Naive thymus-derived CD4-positive, alpha-beta T cell (primary cell): ENCODE measurements at regions of chr9 and their contacts with region 1.

Region 1: GRCh38 chr9:127734747-127735529 is at the start of gene TOR2A:
- DNase-seq: peak; percentile 97 to 99 (median 98)
- ATAC-seq: peak; percentile 97
- H3K4me3 ChIP-seq: peak within 1 kb of the TSS; percentile 73
- H3K4me3 Mint-ChIP-seq: peak within 1 kb of the TSS; percentile 82 to 97 (median 88)
- H3K27ac ChIP-seq: peak within 1 kb of the TSS; percentile 88
- H3K27ac Mint-ChIP-seq: peak within 1 kb of the TSS; percentile 89 to 98 (median 93)
- H3K4me1 ChIP-seq: peaks cover 14 to 15% of the 10 kb centered on the region in 2 donors
- H3K4me1 Mint-ChIP-seq: peaks cover 0 to 21% (median 18%) of the 10 kb centered on the region in 7 donors
- H3K27me3 ChIP-seq: no peaks in the 10 kb centered on the region
- H3K27me3 Mint-ChIP-seq: no peaks in the 10 kb centered on the region
- total RNA-seq, gene TOR2A: 9.5 to 22.3 (median 10.8) TPM

Region 2: DNA sequence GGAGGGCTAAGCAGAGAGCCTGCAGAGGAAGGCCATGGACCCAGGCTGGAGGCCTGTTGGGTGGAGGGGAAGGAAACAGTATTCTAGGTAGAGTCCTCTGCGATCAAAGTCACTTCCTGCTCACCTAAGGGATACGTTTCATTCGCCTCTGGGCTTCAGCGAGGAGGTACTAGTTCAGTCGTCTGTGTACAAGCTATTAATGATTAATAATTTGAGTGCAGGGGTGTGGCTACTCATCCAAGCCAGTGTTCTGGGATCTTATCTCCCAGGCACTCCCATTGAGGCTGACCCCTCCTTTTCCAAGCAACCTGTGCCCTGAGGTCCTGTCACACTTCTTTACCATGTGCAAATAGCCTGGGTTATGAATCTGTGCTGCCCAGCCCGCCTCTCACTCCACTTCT is 795.1 kb before region 1 on chr9:
- CTCF ChIA-PET with region 1: no interaction called
- POLR2A ChIA-PET with region 1: no interaction called
- intact Hi-C with region 1: loop called (anchors 1 to 10 kb)
- DNase-seq: no peak
- ATAC-seq: no peak
- H3K4me3 ChIP-seq: no peak overlapping the region
- H3K4me3 Mint-ChIP-seq: no peak overlapping the region
- H3K27ac ChIP-seq: no peak overlapping the region
- H3K27ac Mint-ChIP-seq: no peak overlapping the region
- H3K4me1 ChIP-seq: no peaks in the 10 kb centered on the region
- H3K4me1 Mint-ChIP-seq: peaks cover 4 to 7% (median 5%) of the 10 kb centered on the region in 7 donors
- H3K27me3 ChIP-seq: no peaks in the 10 kb centered on the region
- H3K27me3 Mint-ChIP-seq: peaks cover 0 to 39% (median 22%) of the 10 kb centered on the region in 5 donors

Region 3: DNA sequence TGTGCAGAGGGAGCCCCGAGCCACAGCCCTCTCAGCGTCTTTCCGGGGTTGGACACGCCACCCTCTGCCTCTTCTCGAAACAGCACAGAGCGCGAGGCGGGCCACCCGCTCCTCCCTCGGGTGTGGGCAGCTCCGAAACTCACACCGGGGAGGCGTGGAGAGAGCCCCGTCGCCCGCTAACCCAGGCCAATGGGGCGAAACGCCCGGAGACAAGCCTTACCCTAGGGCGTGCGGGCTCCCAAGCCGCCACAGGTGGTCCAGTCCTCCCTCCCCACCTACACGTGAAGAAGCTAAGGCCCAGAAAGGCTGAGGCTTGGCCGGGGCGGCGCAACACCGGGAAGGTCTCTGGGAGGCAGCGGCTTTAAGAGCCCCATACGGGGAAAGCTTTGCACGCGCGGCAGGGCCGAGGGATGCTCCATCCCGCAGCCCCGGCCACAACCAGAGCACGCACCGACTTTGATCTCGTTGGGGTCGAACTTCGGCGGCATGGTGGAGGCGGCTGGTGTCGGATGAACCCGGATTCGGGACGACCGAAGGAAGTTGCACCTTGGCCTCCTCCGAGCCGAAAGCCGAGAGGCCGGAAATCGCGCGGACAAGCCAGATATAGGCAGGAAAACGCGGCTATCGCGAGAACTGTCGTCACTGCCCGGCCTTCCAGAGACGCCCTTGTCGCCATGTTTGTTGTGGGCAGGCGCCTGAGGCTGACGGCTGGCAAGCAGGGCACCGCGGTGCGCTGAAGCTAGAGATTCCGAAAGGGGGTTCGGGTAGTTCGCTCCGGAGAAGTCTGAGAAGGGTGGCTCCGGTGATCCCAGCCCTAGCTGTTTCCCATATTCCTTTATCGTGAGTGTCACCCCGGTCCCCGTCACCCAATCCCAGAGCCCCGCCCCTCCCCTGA is 283.9 kb before region 1 on chr9 and contains the starts of genes LRSAM1 and RPL12:
- CTCF ChIA-PET with region 1: no interaction called
- POLR2A ChIA-PET with region 1: interaction called, 4 read pairs
- intact Hi-C with region 1: loop called in 1 of 2 experiments (anchors 1 kb)
- DNase-seq: peak; percentile 95 to 100 (median 98)
- ATAC-seq: peak; percentile 85
- H3K4me3 ChIP-seq: peak within 1 kb of the TSS; percentile 75
- H3K4me3 Mint-ChIP-seq: peak within 1 kb of the TSS; percentile 83 to 98 (median 94)
- H3K27ac ChIP-seq: peak within 1 kb of the TSS; percentile 86
- H3K27ac Mint-ChIP-seq: peak within 1 kb of the TSS; percentile 76 to 97 (median 94)
- H3K4me1 ChIP-seq: peaks cover 21 to 25% of the 10 kb centered on the region in 2 donors
- H3K4me1 Mint-ChIP-seq: peaks cover 21 to 45% (median 40%) of the 10 kb centered on the region in 7 donors
- H3K27me3 ChIP-seq: no peaks in the 10 kb centered on the region
- H3K27me3 Mint-ChIP-seq: no peaks in the 10 kb centered on the region
- total RNA-seq, gene LRSAM1: 15.1 to 23.3 (median 19.8) TPM
- total RNA-seq, gene RPL12: 1,005 to 1,932 (median 1,675) TPM

Region 4: DNA sequence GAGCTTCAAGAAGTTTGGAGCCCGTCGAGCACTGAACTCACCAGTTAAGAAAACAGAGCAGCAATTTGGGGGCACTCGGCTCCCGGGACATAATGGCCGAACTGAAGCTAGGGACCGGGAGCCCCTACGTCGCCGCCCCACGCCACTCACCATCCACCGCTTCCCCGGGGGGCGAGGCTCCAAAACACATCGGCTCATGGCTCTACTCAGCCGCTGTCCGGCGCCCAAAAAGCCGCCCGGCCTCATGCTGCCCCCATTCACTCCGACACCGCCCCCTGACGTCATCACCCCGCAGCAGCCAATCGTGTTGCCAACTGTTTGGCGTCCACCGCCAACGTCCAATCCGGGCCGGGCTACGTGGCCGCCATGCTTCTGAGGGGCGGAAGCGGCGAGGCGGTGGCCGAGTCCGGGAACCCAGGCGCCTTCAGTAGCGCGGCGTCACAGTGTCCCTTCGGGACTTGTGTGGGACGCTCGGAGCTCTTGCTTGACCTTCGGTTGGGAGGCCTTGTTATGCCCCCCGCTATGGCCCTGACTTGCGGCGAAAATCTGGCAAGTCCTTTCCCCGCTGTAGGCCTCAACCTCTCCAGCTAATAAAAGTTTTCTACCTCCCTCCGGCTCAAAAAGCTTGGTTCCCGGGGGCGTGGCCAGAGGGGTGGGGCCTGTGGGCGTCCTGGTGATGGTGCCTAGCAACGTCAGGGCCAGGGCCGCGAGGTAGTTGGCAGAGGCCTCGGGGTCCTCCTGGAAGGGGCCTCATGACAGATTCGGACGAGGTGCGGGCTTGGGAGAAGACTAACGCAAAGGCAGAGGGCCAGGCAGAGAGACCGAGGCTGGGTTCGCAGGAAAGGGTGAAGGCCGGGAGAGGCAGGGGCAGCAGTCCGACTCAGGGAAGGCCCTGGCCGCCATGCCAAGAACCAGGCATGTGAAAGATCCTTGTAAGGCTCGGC is 19.3 kb before region 1 on chr9 and contains the starts of genes PTRH1 and TTC16:
- CTCF ChIA-PET with region 1: interaction called, 11 read pairs
- POLR2A ChIA-PET with region 1: interaction called, 10 read pairs
- intact Hi-C with region 1: loop called (anchors 1 kb)
- DNase-seq: peak; percentile 91 to 98 (median 96)
- ATAC-seq: peak; percentile 96
- H3K4me3 ChIP-seq: peak within 1 kb of the TSS; percentile 85
- H3K4me3 Mint-ChIP-seq: peak within 1 kb of the TSS; percentile 93 to 100 (median 98)
- H3K27ac ChIP-seq: peak within 1 kb of the TSS; percentile 89
- H3K27ac Mint-ChIP-seq: peak within 1 kb of the TSS; percentile 86 to 99 (median 97)
- H3K4me1 ChIP-seq: peaks cover 31 to 32% of the 10 kb centered on the region in 2 donors
- H3K4me1 Mint-ChIP-seq: peaks cover 28 to 47% (median 30%) of the 10 kb centered on the region in 7 donors
- H3K27me3 ChIP-seq: no peaks in the 10 kb centered on the region
- H3K27me3 Mint-ChIP-seq: no peaks in the 10 kb centered on the region
- total RNA-seq, gene PTRH1: 7.8 to 9.5 (median 8.6) TPM
- total RNA-seq, gene TTC16: 0.29 to 9.9 (median 4.6) TPM

Region 5: GRCh38 chr9:127802576-127803443 is 67.9 kb after region 1 on chr9 and contains the start of gene FPGS:
- CTCF ChIA-PET with region 1: interaction called, 4 read pairs
- POLR2A ChIA-PET with region 1: no interaction called
- intact Hi-C with region 1: loop called (anchors 1 kb)
- DNase-seq: peak; percentile 77 to 86 (median 85)
- ATAC-seq: peak; percentile 94
- H3K4me3 ChIP-seq: peak within 1 kb of the TSS; percentile 81
- H3K4me3 Mint-ChIP-seq: peak within 1 kb of the TSS; percentile 81 to 95 (median 90)
- H3K27ac ChIP-seq: peak within 1 kb of the TSS; percentile 93
- H3K27ac Mint-ChIP-seq: peak within 1 kb of the TSS; percentile 80 to 95 (median 89)
- H3K4me1 ChIP-seq: peaks cover 12 to 19% of the 10 kb centered on the region in 2 donors
- H3K4me1 Mint-ChIP-seq: peaks cover 4 to 31% (median 20%) of the 10 kb centered on the region in 7 donors
- H3K27me3 ChIP-seq: no peaks in the 10 kb centered on the region
- H3K27me3 Mint-ChIP-seq: no peaks in the 10 kb centered on the region
- total RNA-seq, gene FPGS: 90.4 to 123 (median 95.4) TPM

Region 6: GRCh38 chr9:127910613-127911205 is 175.8 kb after region 1 on chr9:
- CTCF ChIA-PET with region 1: interaction called, 10 read pairs
- POLR2A ChIA-PET with region 1: interaction called, 3 read pairs
- intact Hi-C with region 1: loop called in 1 of 2 experiments (anchors 1 kb)
- DNase-seq: peak in 1 of 9 donors; percentile 3
- ATAC-seq: no peak
- H3K4me3 ChIP-seq: no peak overlapping the region
- H3K4me3 Mint-ChIP-seq: peak overlapping the region in 2 of 10 donors; percentile 37 to 77
- H3K27ac ChIP-seq: no peak overlapping the region
- H3K27ac Mint-ChIP-seq: peak overlapping the region; percentile 69 to 95 (median 83)
- H3K4me1 ChIP-seq: peaks cover 26 to 33% of the 10 kb centered on the region in 2 donors
- H3K4me1 Mint-ChIP-seq: peaks cover 23 to 50% (median 40%) of the 10 kb centered on the region in 7 donors
- H3K27me3 ChIP-seq: no peaks in the 10 kb centered on the region
- H3K27me3 Mint-ChIP-seq: no peaks in the 10 kb centered on the region

Region 7: DNA sequence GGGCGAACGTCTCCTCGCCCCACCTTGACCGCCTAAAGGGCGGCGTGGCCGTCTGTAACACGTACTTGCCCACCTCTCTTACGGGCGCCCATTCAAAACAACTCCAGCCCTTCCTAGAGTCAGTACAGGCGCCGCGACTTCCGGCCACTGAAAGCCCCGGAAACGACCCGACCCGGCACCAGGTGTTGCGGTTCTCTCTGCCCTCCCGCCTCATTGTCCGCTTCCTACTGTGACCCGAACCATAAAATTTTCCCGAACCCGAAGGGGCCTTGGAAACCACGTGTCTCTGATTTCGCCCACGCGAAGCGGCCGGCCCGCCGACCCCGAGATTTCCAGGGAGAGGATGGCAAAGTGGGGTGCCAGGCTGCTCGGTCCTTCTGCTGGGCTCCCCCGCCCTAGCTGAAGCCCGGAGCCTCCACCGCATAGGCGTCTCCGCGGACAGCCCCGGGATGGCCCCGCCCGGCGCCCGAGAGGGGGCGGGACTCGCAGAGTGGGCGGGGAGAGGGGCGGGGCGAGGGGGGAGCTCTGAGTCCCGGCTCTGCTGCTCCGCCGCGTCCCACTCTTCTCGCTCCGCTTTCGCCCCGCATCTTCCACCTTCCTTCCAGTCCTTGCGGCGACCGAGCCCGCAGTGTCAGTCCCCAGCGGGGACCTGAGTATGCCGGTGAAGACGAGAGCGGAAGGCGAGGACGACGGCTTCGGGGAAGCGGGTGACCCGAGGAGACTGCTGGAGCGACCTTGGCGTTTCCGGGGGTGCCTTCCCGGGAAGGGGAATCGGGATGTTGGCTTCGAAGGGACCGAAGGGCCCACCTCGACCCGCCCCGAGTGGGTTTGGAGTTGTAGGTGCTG is 393.3 kb after region 1 on chr9:
- CTCF ChIA-PET with region 1: no interaction called
- POLR2A ChIA-PET with region 1: no interaction called
- intact Hi-C with region 1: no loop called
- DNase-seq: peak; percentile 81 to 96 (median 93)
- ATAC-seq: peak; percentile 89
- H3K4me3 ChIP-seq: peak overlapping the region; percentile 99
- H3K4me3 Mint-ChIP-seq: peak overlapping the region; percentile 93 to 99 (median 98)
- H3K27ac ChIP-seq: peak overlapping the region; percentile 98
- H3K27ac Mint-ChIP-seq: peak overlapping the region; percentile 97 to 100 (median 99)
- H3K4me1 ChIP-seq: peaks cover 16 to 20% of the 10 kb centered on the region in 2 donors
- H3K4me1 Mint-ChIP-seq: peaks cover 22 to 44% (median 35%) of the 10 kb centered on the region in 7 donors
- H3K27me3 ChIP-seq: no peaks in the 10 kb centered on the region
- H3K27me3 Mint-ChIP-seq: peaks cover 0 to 24% (median 3%) of the 10 kb centered on the region in 5 donors